K562 (cell line): ENCODE measurements at regions of chr7 and their contacts with region 1.

Region 1: GRCh38 chr7:30062591-30062990 is 34.4 kb downstream of the PLEKHA8 start:
- DNase-seq: peak; percentile 52 to 57 (median 56)
- ATAC-seq: peak; percentile 93
- H3K4me3 ChIP-seq: no peak overlapping the region
- H3K27ac ChIP-seq: no peak overlapping the region
- H3K4me1 ChIP-seq: no peaks in the 10 kb centered on the region
- H3K27me3 ChIP-seq: no peaks in the 10 kb centered on the region
- CTCF ChIP-seq: peak; percentile 44 to 85 (median 52); a peak in 4 of 6 replicates
- EP300 ChIP-seq: no peak
- POLR2A ChIP-seq: no peak
- RAD21 ChIP-seq: peak; percentile 51 to 83

Region 2: DNA sequence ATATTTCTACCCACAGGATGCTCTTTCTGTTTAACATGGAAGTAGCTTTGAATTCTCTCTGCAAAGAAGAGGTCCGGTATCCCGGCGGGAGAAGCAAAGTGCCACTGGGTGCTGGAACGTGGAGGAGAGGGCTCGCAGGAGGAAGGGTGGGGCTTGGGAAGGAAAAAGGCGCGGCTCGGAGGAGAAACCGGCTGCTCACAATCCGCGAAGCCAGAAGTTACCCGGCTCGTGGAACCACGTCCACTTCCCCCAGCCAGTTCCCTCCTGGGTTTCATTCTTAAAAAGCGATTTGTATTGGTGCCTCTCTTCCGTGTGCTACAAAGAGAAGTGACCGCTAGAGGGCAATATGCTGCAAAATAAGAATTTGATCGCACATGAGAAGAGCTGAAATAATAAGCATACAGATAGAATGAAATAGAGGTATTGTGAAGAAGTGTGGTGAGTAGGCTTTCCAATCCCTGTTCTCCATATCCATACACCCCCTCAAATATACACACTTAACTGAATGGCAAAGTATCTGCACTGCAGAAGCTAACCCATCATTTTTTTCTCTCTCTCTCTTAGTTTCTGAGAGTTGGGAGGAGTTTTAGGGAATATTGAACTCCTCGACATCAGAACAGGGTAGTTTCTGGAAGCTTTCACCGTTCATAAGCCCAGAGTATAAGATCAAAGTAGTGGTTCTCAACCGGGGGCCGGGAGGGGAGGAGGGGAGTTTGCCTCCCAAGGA is 1135.6 kb before region 1 on chr7:
- CTCF ChIA-PET with region 1: interaction called, 3 read pairs
- POLR2A ChIA-PET with region 1: no interaction called
- in situ Hi-C with region 1: no loop called
- intact Hi-C with region 1: loop called (anchors 10 kb)
- DNase-seq: peak; percentile 41 to 70 (median 46)
- ATAC-seq: peak; percentile 93
- H3K4me3 ChIP-seq: peak overlapping the region; percentile 21; the same call in 1 of the 2 replicates
- H3K27ac ChIP-seq: no peak overlapping the region
- H3K4me1 ChIP-seq: no peaks in the 10 kb centered on the region
- H3K27me3 ChIP-seq: peaks cover 0 to 7% of the 10 kb centered on the region in 2 experiments; a peak in 3 of 5 replicates
- CTCF ChIP-seq: peak; percentile 56 to 84 (median 79); a peak in 5 of 6 replicates
- EP300 ChIP-seq: no peak
- POLR2A ChIP-seq: no peak
- RAD21 ChIP-seq: peak; percentile 53 to 73

Region 3: GRCh38 chr7:29748286-29749108 is 314.1 kb before region 1 on chr7:
- CTCF ChIA-PET with region 1: no interaction called
- POLR2A ChIA-PET with region 1: no interaction called
- in situ Hi-C with region 1: loop called (anchors 10 kb)
- intact Hi-C with region 1: loop called (anchors 1 kb)
- DNase-seq: peak in 1 of 4 experiments; percentile 73
- ATAC-seq: peak; percentile 77
- H3K4me3 ChIP-seq: no peak overlapping the region
- H3K27ac ChIP-seq: no peak overlapping the region
- H3K4me1 ChIP-seq: peaks cover 6 to 15% of the 10 kb centered on the region in 2 experiments; a peak in 2 of 5 replicates
- H3K27me3 ChIP-seq: no peaks in the 10 kb centered on the region; a peak in 2 of 5 replicates
- CTCF ChIP-seq: peak; percentile 59 to 72 (median 70)
- EP300 ChIP-seq: no peak
- POLR2A ChIP-seq: no peak
- RAD21 ChIP-seq: peak; percentile 66 to 86

Region 4: DNA sequence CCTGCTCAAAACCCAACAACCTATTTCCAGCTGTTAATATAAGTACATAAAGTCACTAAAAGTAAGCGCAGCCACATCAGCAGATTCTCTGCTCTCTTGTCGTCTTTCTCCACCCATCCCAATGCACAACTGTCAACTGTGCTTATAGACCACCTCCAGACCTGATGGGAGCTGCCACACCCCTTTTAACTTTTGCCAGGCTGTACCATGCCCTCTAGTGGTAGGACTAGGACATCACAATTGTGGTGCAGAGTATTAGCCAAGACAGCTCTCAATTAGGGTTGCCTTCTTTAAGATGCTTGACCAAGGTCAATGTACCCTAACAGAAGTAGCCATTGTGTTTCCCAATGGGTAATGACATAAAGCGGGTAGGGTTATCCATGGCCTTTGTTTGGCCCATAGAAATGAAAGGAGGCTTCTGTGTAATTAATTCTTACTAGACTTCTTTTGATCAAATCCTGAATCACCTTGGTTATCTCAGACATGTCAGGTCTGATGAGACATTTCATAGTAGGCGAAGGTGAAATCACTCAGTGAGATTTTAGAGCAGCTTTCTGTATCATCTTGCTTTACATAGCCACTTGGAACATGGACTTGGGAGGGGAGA is 141.1 kb before region 1 on chr7:
- CTCF ChIA-PET with region 1: no interaction called
- POLR2A ChIA-PET with region 1: interaction called, 4 read pairs
- in situ Hi-C with region 1: no loop called
- intact Hi-C with region 1: loop called (anchors 1 kb)
- DNase-seq: peak; percentile 67 to 80 (median 78)
- ATAC-seq: peak; percentile 95
- H3K4me3 ChIP-seq: no peak overlapping the region
- H3K27ac ChIP-seq: no peak overlapping the region
- H3K4me1 ChIP-seq: peaks cover 2 to 7% of the 10 kb centered on the region in 2 experiments; a peak in 3 of 5 replicates
- H3K27me3 ChIP-seq: peaks cover 6 to 19% of the 10 kb centered on the region in 2 experiments; a peak in 2 of 5 replicates
- CTCF ChIP-seq: peak; percentile 91 to 93 (median 91)
- EP300 ChIP-seq: no peak
- POLR2A ChIP-seq: no peak
- RAD21 ChIP-seq: peak; percentile 83 to 96

Region 5: DNA sequence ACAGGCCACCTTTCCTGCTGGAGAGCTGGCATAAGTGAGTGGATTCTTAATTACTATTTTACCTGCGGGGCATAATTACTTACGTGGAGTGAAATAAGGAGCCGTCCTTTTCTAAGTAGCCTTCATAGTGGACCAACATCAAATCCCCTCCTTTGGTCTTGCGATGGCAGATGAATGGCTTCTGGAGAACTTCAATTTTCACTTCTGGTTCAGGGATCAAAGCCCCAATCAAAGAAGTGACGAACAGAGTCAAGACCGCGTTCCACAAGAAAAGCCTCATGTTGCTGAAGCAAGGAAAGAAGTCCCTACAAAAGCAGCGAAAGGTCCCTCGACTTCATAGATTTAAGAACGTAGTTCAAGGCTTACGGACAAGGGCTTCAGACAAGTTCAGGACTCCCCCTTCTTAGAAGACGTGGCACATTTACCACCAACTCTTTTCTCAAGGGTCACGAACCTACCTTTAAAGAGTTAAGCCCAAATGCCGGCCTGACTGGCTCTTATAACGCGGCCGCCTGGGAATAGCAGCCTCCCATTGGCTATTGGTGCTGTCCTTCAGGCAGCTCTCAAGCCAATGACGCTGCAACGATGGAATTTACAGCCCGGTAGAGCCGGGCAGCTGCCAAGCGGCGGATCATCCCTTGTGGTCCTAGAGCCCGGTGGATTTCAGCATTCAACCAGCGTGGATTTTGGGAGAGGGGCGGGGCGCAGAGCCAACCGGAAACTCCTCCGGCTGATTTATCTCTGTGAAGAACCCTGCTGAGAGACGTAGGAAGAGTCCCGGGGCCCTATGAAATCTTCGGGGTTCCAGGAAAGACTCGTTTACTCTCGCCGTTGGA is 36.1 kb before region 1 on chr7 and contains the start of gene FKBP14:
- CTCF ChIA-PET with region 1: interaction called, 3 read pairs
- POLR2A ChIA-PET with region 1: no interaction called
- in situ Hi-C with region 1: no loop called
- intact Hi-C with region 1: loop called (anchors 2 kb)
- DNase-seq: peak; percentile 96 to 99 (median 96)
- ATAC-seq: peak; percentile 92
- H3K4me3 ChIP-seq: peak within 1 kb of the TSS; percentile 82
- H3K27ac ChIP-seq: peak within 1 kb of the TSS; percentile 95
- H3K4me1 ChIP-seq: peaks cover 10 to 17% of the 10 kb centered on the region in 2 experiments; a peak in 3 of 5 replicates
- H3K27me3 ChIP-seq: no peaks in the 10 kb centered on the region
- CTCF ChIP-seq: peak in 1 of 3 experiments; percentile 2; a peak in 1 of 6 replicates
- EP300 ChIP-seq: 0 out of 2 replicates have a peak, but pooled peaks have one; percentile 33
- POLR2A ChIP-seq: peak; percentile 89
- RAD21 ChIP-seq: no peak
- polyA plus RNA-seq, gene FKBP14: 10.3 to 12.4 TPM

Region 6: GRCh38 chr7:30038182-30038980 is 24.2 kb before region 1 on chr7:
- CTCF ChIA-PET with region 1: no interaction called
- POLR2A ChIA-PET with region 1: no interaction called
- in situ Hi-C with region 1: no loop called
- intact Hi-C with region 1: no loop called
- DNase-seq: no peak
- ATAC-seq: no peak
- H3K4me3 ChIP-seq: no peak overlapping the region
- H3K27ac ChIP-seq: no peak overlapping the region
- H3K4me1 ChIP-seq: peaks cover 0 to 10% of the 10 kb centered on the region in 2 experiments; a peak in 2 of 5 replicates
- H3K27me3 ChIP-seq: no peaks in the 10 kb centered on the region
- CTCF ChIP-seq: no peak
- EP300 ChIP-seq: no peak
- POLR2A ChIP-seq: no peak
- RAD21 ChIP-seq: no peak